ENCODE measurements at regions of chr15 and their contacts with region 1.

Region 1: GRCh38 chr15:78709263-78709882 is 68.4 kb upstream of the CHRNB4 start:
- DNase-seq: peak; percentile 64 to 90 (median 74)
- H3K4me3 ChIP-seq: peak overlapping the region in 1 of 4 donors; percentile 30
- H3K27ac ChIP-seq: no peak overlapping the region
- H3K4me1 ChIP-seq: peaks cover 0 to 8% of the 10 kb centered on the region in 2 donors
- H3K27me3 ChIP-seq: no peaks in the 10 kb centered on the region
- CTCF ChIP-seq: peak; percentile 88 to 97 (median 90)
- POLR2A ChIP-seq: no peak

Region 2: DNA sequence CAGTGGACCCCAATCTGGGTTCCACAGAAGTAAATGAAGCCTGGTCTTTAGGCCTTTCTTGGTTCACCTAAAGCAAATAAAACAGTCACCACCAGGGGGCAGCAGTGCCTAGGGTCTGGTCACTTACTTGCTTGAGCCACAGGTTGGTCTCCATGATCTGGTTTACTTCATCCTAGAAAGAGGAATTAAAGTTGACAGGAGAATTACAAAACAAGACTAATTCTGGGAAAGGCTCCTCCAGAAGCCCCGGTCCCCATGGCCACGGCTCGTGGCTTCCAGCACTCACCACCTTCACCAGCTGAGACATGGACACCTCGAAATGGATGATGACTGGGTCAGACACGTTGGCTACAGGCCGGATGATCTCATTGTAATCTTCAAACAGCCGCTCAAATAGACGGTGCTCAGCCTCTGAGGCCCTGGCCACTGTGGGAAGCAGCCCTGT is 90.9 kb before region 1 on chr15:
- intact Hi-C with region 1: loop called (anchors 5 kb)
- DNase-seq: peak; percentile 85 to 98 (median 91)
- H3K4me3 ChIP-seq: no peak overlapping the region
- H3K27ac ChIP-seq: peak overlapping the region in 1 of 5 donors; percentile 69
- H3K4me1 ChIP-seq: peaks cover 0 to 11% of the 10 kb centered on the region in 2 donors
- H3K27me3 ChIP-seq: peaks cover 28% of the 10 kb centered on the region
- CTCF ChIP-seq: peak; percentile 77 to 97 (median 88)
- POLR2A ChIP-seq: peak in 1 of 2 donors; percentile 26

Region 3: DNA sequence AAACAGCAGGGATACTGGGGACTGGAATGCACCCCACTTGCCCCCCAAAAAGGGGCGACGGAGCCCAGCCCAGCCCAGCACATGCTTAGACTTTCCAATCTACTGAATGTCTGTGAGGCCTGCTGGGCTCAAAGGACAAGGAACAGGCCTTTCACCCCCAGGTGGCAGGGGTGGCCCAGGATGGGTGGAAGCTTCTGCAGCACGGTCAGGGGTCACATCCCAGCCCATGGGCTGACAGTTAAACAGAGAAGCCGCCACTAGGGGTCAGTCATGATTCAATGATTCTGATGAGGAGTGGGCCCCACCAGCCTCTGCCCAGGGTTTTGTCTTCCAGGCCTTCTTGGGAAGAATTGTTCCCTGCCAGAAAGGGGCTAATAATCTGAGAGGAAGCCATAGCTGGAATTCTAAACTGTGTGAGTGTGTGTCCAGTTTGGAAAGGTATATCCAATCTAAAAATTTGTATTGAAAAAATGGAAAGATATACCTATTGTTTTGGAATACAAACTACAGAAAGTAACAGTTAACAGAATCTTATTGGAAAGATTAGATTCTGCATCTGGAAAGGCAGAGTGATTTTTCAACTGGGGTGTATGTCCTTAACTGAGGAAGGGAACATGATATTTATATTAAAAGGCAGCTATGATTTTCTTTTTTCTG is 70.6 kb before region 1 on chr15:
- intact Hi-C with region 1: loop called (anchors 5 kb)
- DNase-seq: peak; percentile 32 to 87 (median 70)
- H3K4me3 ChIP-seq: no peak overlapping the region
- H3K27ac ChIP-seq: no peak overlapping the region
- H3K4me1 ChIP-seq: peaks cover 7 to 12% of the 10 kb centered on the region in 2 donors
- H3K27me3 ChIP-seq: no peaks in the 10 kb centered on the region
- CTCF ChIP-seq: peak; percentile 54 to 71 (median 64)
- POLR2A ChIP-seq: no peak

Measured in adrenal gland (tissue), 19 donors.